Ascending aorta (tissue), 2 donors: ENCODE measurements at regions of chr19 and their contacts with region 1.

Region 1: DNA sequence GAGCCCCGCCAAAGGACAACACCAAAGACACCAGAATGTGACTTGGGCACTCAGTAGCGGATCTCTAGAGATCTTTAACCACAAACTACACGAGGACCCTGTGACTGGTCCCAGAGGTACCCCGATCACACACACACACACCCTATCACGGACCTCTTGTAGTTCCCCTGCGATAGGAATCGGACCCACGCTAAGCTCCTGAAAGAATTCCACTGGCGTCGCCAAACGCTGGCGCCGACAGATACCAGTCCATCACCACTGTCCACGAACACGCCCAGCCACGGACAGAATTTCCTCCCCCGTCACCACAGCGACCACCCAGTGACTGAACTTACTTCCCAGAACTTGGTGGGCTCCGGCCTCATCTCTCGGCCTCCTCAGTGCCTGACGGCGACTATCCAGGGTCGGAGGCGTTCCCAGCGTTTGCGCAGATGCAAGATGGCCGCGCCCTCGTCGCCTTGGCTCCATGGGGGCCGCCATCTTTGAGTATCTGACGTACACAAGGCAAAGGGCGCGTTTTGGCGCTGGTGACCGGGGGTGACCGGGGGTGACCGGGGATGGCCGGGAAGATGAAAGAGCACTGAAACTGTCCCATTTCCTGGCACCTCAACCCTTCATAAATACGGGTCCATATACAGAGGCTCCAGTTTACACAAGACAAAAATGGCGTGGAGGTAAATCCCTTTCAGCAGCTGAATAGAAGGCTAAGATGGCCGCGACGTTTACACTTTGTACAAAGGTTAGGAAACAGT is at the start of gene ZNF615:
- DNase-seq: peak; percentile 53 to 93
- H3K4me3 ChIP-seq: peak within 1 kb of the TSS; percentile 68 to 77
- H3K27ac ChIP-seq: peak within 1 kb of the TSS; percentile 73 to 83
- H3K4me1 ChIP-seq: peaks cover 0 to 5% of the 10 kb centered on the region in 2 donors
- H3K27me3 ChIP-seq: no peaks in the 10 kb centered on the region
- CTCF ChIP-seq: no peak
- total RNA-seq, gene ZNF615: 11.7 TPM

Region 2: DNA sequence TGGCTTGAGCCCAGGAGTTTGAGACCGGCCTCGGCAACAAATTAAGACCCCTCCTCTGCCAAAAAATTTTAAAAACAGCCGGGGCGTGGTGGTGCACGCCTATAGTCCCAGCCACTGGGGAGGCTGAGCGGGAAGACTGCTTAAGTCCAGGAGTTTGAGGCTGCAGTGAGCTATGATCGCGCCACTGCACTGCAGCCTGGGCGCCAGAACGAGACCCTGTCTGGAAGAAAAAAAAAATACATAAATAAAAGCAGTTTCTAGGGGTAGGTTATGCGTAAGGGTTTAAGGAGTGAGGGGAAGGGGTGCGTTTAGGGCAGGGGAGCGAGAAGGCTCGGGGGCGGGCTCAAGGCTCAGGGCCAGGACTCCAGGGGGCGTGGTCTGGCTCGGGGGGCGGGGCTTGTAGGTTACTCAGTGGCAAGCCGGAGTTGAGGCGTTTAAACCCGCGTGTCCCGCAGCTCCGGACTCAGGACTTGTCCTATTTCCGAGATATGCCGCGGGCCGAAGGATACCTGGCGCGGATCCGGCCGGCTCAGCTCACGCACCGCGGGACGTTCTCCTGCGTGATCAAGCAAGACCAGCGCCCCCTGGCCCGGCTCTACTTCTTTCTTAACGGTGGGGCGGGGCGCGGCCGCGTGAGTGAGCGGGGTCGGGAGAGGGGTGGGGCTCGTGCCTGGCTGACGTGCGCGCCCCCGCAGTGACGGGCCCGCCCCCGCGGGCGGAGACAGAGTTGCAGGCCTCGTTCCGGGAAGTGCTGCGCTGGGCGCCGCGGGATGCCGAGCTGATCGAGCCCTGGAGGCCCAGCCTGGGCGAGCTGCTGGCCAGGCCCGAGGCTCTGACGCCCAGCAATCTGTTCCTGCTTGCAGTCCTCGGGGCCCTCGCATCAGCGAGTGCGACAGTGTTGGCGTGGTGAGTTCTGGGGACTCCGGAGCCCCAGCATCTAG is 304.1 kb before region 1 on chr19:
- intact Hi-C with region 1: loop called (anchors 10 kb)
- DNase-seq: peak; percentile 90 to 99
- H3K4me3 ChIP-seq: peak overlapping the region; percentile 60 to 76
- H3K27ac ChIP-seq: peak overlapping the region; percentile 80 to 93
- H3K4me1 ChIP-seq: peaks cover 9 to 17% of the 10 kb centered on the region in 2 donors
- H3K27me3 ChIP-seq: no peaks in the 10 kb centered on the region
- CTCF ChIP-seq: peak; percentile 32 to 54 (median 44)

Region 3: GRCh38 chr19:52351511-52351910 is 343.5 kb after region 1 on chr19:
- intact Hi-C with region 1: no loop called
- DNase-seq: no peak
- H3K4me3 ChIP-seq: no peak overlapping the region
- H3K27ac ChIP-seq: no peak overlapping the region
- H3K4me1 ChIP-seq: no peaks in the 10 kb centered on the region
- H3K27me3 ChIP-seq: no peaks in the 10 kb centered on the region
- CTCF ChIP-seq: no peak